ENCODE measurements at regions of chr17 and their contacts with region 1.

Region 1: DNA sequence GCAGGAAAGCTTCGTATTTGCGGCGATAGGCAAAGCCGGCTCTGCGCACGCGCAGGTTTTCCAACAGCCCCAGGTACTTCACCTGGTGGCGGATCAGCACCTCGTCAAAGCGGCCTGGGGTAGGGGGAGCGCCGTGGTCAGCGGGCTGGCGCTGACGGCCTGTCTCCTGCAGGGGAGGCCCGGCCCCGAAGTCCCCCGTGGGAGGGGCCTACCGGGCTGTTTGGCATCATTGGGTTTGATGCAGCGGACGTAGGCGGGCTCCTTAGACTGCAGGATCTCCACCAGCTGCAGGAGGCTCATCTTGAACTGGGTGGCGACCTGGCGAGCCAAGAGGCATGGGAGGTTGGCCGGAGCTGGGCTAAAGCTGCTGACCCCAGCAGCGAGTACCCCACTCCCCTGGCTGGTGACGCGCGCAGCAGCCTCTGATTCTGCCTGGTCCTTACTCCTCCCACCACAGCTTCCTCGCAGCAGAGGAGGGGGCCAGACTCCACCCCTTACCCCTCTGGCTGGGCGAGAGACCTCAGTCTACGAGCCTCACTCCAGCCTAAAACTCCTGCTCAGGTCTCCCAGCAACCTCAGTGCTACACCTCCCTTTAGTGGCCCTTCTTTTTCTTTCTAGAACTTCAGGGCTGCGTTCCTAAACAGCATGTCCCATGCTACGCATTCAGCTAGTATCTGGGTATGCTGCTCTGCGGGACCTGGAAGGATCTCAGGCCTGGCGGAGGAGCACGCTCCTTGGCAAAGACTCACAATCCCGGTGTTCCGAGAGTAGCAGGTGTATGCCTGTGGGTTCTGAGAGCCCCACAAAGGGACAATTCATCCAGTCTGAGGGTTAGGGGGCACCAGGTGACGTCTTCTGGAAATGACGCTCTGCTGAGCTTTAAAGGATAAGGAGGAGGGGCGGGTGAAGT is 16.1 kb upstream of the CRK start:
- DNase-seq: no peak
- ATAC-seq: no peak
- H3K4me3 ChIP-seq: no peak overlapping the region
- H3K27ac ChIP-seq: no peak overlapping the region
- H3K4me1 ChIP-seq: peaks cover 11 to 13% of the 10 kb centered on the region in 2 donors
- H3K27me3 ChIP-seq: no peaks in the 10 kb centered on the region
- CTCF ChIP-seq: no peak
- POLR2A ChIP-seq: no peak

Region 2: DNA sequence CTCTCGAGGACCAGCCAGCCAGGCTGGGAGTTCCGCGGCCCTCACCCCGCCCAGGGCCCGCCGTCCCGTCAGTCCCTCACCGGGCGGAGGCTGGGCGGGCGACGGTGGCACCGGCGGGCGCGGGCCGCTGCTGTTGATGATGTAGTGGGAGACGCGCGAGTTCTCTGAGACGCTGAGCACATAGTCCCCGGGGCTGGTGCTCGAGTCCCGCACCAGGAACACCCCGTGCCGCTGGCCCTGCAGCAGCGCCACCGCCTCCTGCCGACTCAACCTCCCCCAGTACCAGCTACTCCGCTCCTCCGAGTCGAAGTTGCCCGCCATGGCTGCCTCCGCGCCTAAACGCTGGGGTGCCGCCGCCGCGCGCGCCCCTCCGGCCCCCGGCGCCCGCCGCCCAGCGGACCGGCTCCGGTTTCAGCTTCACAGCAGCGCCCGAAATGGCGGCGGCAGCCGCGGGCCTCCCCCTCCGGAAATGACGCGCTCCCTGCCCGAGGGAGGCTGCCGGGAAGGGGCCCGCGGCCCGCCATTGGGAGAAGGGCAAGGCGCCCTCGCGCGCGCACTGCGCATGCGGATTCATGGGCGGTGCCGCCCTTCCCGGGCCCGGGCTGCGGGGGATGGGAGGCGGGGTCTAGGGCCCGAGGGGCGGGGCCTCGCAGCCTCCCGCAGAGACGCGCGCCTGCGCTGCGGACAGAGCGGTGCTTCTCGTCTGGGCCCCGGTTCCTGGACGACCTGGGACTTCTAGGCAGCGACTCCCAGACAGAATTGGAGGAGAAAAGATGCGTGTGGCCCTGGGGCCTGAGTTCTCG is 16.2 kb before region 1 on chr17 and contains the start of gene CRK:
- in situ Hi-C with region 1: no loop called
- intact Hi-C with region 1: no loop called
- DNase-seq: peak; percentile 94
- ATAC-seq: peak; percentile 74 to 75
- H3K4me3 ChIP-seq: peak within 1 kb of the TSS; percentile 76 to 92 (median 84)
- H3K27ac ChIP-seq: peak within 1 kb of the TSS; percentile 94 to 99 (median 96)
- H3K4me1 ChIP-seq: peaks cover 47 to 52% of the 10 kb centered on the region in 2 donors
- H3K27me3 ChIP-seq: no peaks in the 10 kb centered on the region
- CTCF ChIP-seq: no peak
- POLR2A ChIP-seq: peak; percentile 100
- total RNA-seq, gene CRK: 48.6 to 64.6 (median 56.7) TPM

Region 3: GRCh38 chr17:1484676-1485421 is 12.7 kb after region 1 on chr17:
- in situ Hi-C with region 1: no loop called
- intact Hi-C with region 1: loop called (anchors 2 kb)
- DNase-seq: peak in 1 of 2 donors; percentile 56
- ATAC-seq: peak; percentile 20 to 28
- H3K4me3 ChIP-seq: peak overlapping the region; percentile 69 to 74 (median 72)
- H3K27ac ChIP-seq: peak overlapping the region; percentile 83 to 92 (median 90)
- H3K4me1 ChIP-seq: peaks cover 28 to 34% of the 10 kb centered on the region in 2 donors
- H3K27me3 ChIP-seq: no peaks in the 10 kb centered on the region
- CTCF ChIP-seq: peak in 2 of 5 experiments; percentile 11 to 17
- POLR2A ChIP-seq: no peak

Region 4: DNA sequence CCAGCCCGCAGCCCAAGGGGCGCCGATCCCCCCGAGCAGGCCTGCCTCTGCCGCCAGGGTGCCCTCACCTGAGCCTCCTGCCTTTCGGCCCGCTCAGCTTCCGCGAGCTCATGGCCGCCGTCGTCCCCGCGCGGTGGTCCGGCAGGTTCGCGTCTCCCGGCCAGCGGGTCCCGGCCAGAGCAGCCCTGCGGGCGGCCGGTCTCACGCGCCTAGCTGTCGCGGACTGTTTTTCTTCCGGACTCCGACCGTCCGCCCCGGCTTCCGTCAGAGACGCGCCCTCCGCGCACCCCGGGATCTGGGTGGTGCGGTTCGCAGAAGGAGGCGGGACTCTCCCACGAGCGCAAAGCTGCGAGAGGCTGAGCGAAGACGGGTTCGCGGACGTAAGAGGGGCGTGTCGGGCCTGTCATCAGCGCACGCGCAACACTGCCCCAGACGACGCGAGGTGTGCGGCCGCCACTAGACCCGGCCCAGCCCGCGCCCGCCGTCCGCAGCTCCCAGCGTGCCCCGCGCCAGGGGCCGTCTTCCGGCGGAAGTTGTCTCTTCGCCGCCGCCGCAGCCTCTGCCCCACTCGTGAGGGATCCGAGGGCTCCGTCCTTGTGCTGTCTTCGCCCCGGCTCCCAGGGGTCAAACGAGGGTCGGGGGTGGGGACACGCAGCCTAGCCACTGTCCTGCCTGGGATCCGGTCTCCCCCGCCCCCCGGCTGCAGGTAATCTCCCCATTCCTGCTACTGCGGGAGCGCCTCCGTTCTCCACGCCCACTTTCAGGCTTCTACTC is 44.4 kb after region 1 on chr17 and contains the start of gene INPP5K:
- in situ Hi-C with region 1: no loop called
- intact Hi-C with region 1: no loop called
- DNase-seq: peak; percentile 98
- ATAC-seq: peak; percentile 88 to 89
- H3K4me3 ChIP-seq: peak within 1 kb of the TSS; percentile 81 to 98 (median 90)
- H3K27ac ChIP-seq: peak within 1 kb of the TSS; percentile 91 to 99 (median 98)
- H3K4me1 ChIP-seq: peaks cover 52 to 55% of the 10 kb centered on the region in 2 donors
- H3K27me3 ChIP-seq: no peaks in the 10 kb centered on the region
- CTCF ChIP-seq: peak in 1 of 5 experiments; percentile 28
- POLR2A ChIP-seq: peak; percentile 84 to 92
- total RNA-seq, gene INPP5K: 102 to 196 (median 114) TPM

Region 5: DNA sequence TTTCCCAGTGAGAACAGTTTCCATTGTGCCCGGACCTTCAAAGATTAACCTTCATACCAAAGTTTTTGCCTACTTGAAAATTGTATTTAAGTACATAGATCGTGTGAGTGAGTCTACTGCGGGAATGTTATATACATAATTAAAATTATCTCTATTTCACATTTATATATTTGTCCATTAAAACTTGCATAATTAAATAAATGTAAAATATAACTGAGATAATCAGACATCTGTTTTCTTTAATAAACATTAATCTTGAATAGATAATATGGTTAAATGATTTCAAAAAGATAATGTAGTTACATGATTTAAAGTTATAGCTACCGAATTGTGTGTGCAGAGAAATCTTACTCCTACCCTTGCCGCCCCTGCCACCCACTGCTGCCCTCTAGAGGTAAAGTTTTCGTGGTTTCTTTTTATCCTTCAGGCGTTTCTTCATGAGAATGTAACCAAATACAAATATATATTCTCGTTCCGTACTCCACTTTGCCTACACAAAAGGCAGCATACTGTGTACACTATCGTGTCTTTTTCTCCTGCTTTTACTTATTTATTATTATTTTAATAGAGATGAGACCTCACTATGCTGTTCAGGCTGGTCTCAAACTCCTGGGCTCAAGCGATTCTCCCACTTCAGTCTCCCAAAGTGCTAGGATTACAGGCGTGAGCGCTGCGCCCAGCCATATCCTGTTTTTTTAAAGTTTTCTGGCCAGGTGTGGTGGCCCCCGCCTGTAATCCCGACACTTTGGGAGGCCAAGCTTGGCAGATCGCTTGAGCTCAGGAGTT is 393.3 kb after region 1 on chr17:
- in situ Hi-C with region 1: no loop called
- intact Hi-C with region 1: no loop called
- DNase-seq: peak in 1 of 2 donors; percentile 51
- ATAC-seq: no peak
- H3K4me3 ChIP-seq: no peak overlapping the region
- H3K27ac ChIP-seq: peak overlapping the region; percentile 88 to 98 (median 92)
- H3K4me1 ChIP-seq: peaks cover 27% of the 10 kb centered on the region in 2 donors
- H3K27me3 ChIP-seq: no peaks in the 10 kb centered on the region
- CTCF ChIP-seq: peak; percentile 62 to 86 (median 75)
- POLR2A ChIP-seq: no peak

Measured in gastrocnemius medialis (tissue), 4 donors.